ENCODE measurements at regions of chr4 and their contacts with region 1.

Region 1: GRCh38 chr4:152696764-152697261 is 17.0 kb upstream of the TMEM154 start:
- DNase-seq: peak; percentile 84
- H3K4me3 Mint-ChIP-seq: no peak overlapping the region
- H3K27ac Mint-ChIP-seq: peak overlapping the region; percentile 51
- H3K4me1 Mint-ChIP-seq: peaks cover 19% of the 10 kb centered on the region
- H3K27me3 Mint-ChIP-seq: peaks cover 3% of the 10 kb centered on the region

Region 2: GRCh38 chr4:152679414-152680281 is 17.2 kb before region 1 on chr4 and contains the start of gene TMEM154:
- CTCF ChIA-PET with region 1: interaction called, 3 read pairs
- POLR2A ChIA-PET with region 1: interaction called, 5 read pairs
- intact Hi-C with region 1: loop called (anchors 1 kb)
- DNase-seq: peak; percentile 82
- H3K4me3 Mint-ChIP-seq: peak within 1 kb of the TSS; percentile 91
- H3K27ac Mint-ChIP-seq: peak within 1 kb of the TSS; percentile 84
- H3K4me1 Mint-ChIP-seq: peaks cover 58% of the 10 kb centered on the region
- H3K27me3 Mint-ChIP-seq: no peaks in the 10 kb centered on the region
- total RNA-seq, gene TMEM154: 18.1 to 20.8 TPM

Region 3: DNA sequence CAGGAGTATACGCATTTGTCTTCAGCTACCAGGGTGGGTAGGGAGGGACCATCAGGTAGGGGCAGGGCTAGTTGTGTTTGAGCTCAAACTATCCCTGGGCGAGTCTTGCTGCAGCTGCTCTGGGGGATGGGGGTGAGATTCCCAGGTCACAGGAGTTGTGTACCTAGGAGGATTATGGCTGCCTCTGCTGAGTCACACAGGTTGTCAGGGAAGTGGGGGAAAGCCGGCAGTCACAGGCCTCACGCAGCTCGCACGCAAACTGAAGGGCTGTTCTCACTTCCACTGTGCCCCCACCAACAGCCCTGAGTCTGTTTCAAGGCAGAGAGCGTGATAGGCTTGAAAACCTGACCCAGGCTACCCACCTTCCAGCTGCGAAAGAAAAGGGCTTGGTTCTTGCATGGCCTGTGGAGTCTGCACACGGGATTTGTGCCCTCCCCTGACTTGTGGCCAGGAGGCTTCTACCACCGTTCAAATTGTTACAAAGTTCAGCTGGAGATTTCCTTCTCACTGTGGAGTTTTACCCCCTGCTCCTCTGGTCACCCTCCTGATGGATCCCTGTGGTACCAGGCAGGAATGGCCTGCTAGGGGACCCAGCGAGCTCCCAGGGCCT is 146.8 kb after region 1 on chr4:
- CTCF ChIA-PET with region 1: no interaction called
- POLR2A ChIA-PET with region 1: no interaction called
- intact Hi-C with region 1: no loop called
- DNase-seq: no peak
- H3K4me3 Mint-ChIP-seq: no peak overlapping the region
- H3K27ac Mint-ChIP-seq: no peak overlapping the region
- H3K4me1 Mint-ChIP-seq: peaks cover 16% of the 10 kb centered on the region
- H3K27me3 Mint-ChIP-seq: no peaks in the 10 kb centered on the region